Activated naive CD4-positive, alpha-beta T cell treated with anti-CD3 and anti-CD28 coated beads for 36 hours (primary cell): ENCODE measurements at regions of chr4 and their contacts with region 1.

Region 1: DNA sequence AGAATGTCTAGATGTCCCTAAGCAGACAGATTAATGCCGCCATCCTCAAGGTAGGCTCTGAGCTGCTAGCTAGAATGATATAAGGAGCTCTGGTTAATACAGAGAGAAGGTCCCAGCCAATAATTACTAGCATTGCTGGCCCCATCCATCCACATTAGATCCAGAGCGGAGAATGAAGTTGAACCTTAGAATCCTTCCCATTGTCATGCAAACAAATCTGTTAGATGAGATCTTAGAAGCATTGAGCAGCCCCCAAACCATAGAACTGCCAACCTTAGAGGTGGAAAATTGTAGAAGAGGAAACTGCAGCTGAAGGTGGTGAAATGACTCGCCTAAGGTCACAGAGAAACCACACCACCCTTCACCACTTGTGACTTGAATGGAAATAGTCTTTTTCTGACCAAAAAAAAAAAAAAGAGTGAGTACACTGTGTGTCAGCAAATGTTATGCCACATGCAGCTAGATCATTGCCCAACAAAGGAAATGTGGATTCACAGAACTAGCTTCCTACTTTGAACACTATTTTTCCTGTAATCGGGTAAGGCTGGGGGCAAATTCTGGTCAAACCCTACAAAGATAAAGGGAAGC is 162.1 kb downstream of the SMIM20 start:
- DNase-seq: peak; percentile 80
- H3K4me3 Mint-ChIP-seq: no peak overlapping the region
- H3K27ac Mint-ChIP-seq: peak overlapping the region; percentile 85
- H3K4me1 Mint-ChIP-seq: peaks cover 81% of the 10 kb centered on the region
- H3K27me3 Mint-ChIP-seq: no peaks in the 10 kb centered on the region

Region 2: DNA sequence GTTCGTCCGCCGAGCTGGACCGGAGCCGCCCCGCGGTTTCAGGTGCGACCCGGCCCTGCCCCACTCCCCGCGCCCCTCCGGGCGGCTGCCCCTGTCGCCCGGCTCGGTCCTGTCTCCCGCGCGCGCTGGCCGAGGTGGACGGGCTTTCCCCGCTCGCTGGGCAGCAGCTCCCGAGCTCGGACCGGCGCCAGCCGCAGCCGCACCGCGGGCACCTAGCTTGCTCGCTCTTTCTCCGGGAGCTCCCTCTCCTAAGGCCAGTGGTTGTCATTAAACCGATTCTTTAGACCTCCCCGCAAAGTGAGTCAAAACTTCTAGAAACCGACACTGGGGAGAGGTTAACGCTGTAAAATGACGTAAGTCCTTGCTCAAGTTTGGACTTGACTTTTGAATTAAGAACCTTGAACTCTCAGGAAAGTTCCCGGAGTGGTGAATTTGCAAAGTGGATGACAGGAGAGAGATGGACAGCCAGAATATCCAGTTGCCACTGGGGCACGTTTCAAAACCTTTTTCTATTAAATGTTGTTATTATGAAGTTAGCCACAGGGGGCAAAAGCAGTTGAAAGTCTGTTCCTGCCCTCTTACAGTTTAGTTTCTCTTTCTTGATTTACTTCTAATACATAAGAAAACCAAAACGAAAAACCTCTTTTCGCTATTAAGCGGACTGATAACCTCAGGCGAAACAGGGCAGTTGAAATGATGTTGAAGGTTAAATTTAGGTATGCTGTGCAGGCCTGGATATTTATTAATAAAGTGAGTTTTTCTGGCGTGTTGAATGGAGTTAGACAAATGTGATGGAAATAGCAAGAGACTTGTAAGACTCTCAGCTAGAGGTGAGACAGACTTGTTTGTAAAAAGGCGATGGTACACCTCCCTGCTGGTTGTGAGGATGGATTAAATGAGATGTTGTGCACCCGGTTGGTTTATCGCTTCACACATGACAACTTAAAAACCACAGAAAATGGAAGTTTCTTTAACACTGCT is 841.4 kb before region 1 on chr4:
- CTCF ChIA-PET with region 1: no interaction called
- intact Hi-C with region 1: loop called (anchors 5 kb)
- DNase-seq: peak; percentile 63
- H3K4me3 Mint-ChIP-seq: peak overlapping the region; percentile 92
- H3K27ac Mint-ChIP-seq: peak overlapping the region; percentile 91
- H3K4me1 Mint-ChIP-seq: peaks cover 40% of the 10 kb centered on the region
- H3K27me3 Mint-ChIP-seq: no peaks in the 10 kb centered on the region

Region 3: GRCh38 chr4:25938787-25939186 is 137.3 kb before region 1 on chr4:
- CTCF ChIA-PET with region 1: no interaction called
- intact Hi-C with region 1: loop called (anchors 2 kb)
- DNase-seq: peak; percentile 68
- H3K4me3 Mint-ChIP-seq: no peak overlapping the region
- H3K27ac Mint-ChIP-seq: peak overlapping the region; percentile 5
- H3K4me1 Mint-ChIP-seq: peaks cover 20% of the 10 kb centered on the region
- H3K27me3 Mint-ChIP-seq: peaks cover 15% of the 10 kb centered on the region

Region 4: DNA sequence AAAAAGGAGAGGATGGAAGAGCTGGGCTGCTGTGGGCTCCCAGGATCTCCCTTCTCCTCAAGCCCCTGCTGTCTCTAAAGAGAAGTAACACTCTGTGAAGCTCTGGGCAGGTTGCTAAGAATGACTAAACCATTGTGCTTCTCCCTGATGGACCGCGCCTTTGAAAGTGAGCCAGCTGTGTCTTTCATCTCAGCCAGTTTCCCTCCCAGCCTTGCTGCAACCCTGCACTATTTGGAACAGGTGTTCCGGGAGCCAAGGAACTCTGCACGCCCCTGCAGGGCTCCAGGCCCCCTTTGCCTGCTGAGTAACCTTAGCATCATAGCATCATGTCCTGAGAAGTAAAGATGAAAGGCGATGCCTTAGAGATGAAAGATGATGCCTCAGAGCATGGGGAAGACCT is 122.4 kb before region 1 on chr4:
- CTCF ChIA-PET with region 1: no interaction called
- intact Hi-C with region 1: no loop called
- DNase-seq: no peak
- H3K4me3 Mint-ChIP-seq: no peak overlapping the region
- H3K27ac Mint-ChIP-seq: no peak overlapping the region
- H3K4me1 Mint-ChIP-seq: peaks cover 12% of the 10 kb centered on the region
- H3K27me3 Mint-ChIP-seq: peaks cover 22% of the 10 kb centered on the region

Region 5: GRCh38 chr4:26088433-26088928 is 12.4 kb after region 1 on chr4:
- CTCF ChIA-PET with region 1: interaction called, 14 read pairs
- intact Hi-C with region 1: loop called (anchors 1 kb)
- DNase-seq: peak; percentile 75
- H3K4me3 Mint-ChIP-seq: peak overlapping the region; percentile 19
- H3K27ac Mint-ChIP-seq: peak overlapping the region; percentile 93
- H3K4me1 Mint-ChIP-seq: peaks cover 47% of the 10 kb centered on the region
- H3K27me3 Mint-ChIP-seq: peaks cover 6% of the 10 kb centered on the region

Region 6: DNA sequence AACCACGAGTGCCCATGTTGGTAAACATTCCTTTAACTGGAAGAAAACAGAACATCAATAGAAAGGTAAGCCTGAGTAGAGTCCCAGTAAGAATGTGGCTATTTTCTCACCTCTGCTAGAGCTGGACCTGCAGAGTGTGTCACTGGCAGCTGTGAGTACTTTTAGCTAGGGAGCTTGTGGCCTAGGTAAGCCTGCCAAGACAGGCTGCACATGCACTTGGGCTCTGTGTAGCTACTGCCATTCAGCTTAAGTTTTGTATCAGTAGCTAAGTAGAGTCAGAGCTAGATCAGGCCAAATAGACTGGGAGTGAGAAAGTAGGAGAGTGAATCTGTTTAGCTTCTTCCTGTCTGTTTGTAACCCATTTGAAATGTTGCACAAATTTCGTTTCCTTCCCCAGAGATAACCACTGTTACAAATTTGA is 280.0 kb after region 1 on chr4:
- CTCF ChIA-PET with region 1: no interaction called
- intact Hi-C with region 1: no loop called
- DNase-seq: peak; percentile 14
- H3K4me3 Mint-ChIP-seq: no peak overlapping the region
- H3K27ac Mint-ChIP-seq: no peak overlapping the region
- H3K4me1 Mint-ChIP-seq: peaks cover 29% of the 10 kb centered on the region
- H3K27me3 Mint-ChIP-seq: no peaks in the 10 kb centered on the region

Region 7: GRCh38 chr4:26410385-26411293 is 334.5 kb after region 1 on chr4:
- CTCF ChIA-PET with region 1: no interaction called
- intact Hi-C with region 1: loop called (anchors 2 kb)
- DNase-seq: peak; percentile 49
- H3K4me3 Mint-ChIP-seq: no peak overlapping the region
- H3K27ac Mint-ChIP-seq: no peak overlapping the region
- H3K4me1 Mint-ChIP-seq: peaks cover 5% of the 10 kb centered on the region
- H3K27me3 Mint-ChIP-seq: no peaks in the 10 kb centered on the region

Region 8: GRCh38 chr4:26992657-26993361 is 916.7 kb after region 1 on chr4:
- CTCF ChIA-PET with region 1: no interaction called
- intact Hi-C with region 1: loop called (anchors 1 kb)
- DNase-seq: peak; percentile 47
- H3K4me3 Mint-ChIP-seq: no peak overlapping the region
- H3K27ac Mint-ChIP-seq: no peak overlapping the region
- H3K4me1 Mint-ChIP-seq: peaks cover 26% of the 10 kb centered on the region
- H3K27me3 Mint-ChIP-seq: no peaks in the 10 kb centered on the region

Region 9: GRCh38 chr4:27387711-27388110 is 1311.6 kb after region 1 on chr4:
- CTCF ChIA-PET with region 1: no interaction called
- intact Hi-C with region 1: no loop called
- DNase-seq: no peak
- H3K4me3 Mint-ChIP-seq: no peak overlapping the region
- H3K27ac Mint-ChIP-seq: no peak overlapping the region
- H3K4me1 Mint-ChIP-seq: no peaks in the 10 kb centered on the region
- H3K27me3 Mint-ChIP-seq: no peaks in the 10 kb centered on the region